ENCODE measurements at regions of chr15 and their contacts with region 1.

Region 1: GRCh38 chr15:31259562-31260252 is 66.9 kb upstream of the KLF13 start:
- DNase-seq: no peak
- ATAC-seq: no peak
- H3K4me3 ChIP-seq: no peak overlapping the region
- H3K27ac ChIP-seq: no peak overlapping the region
- H3K4me1 ChIP-seq: peaks cover 68% of the 10 kb centered on the region
- H3K27me3 ChIP-seq: no peaks in the 10 kb centered on the region
- CTCF ChIP-seq: no peak
- EP300 ChIP-seq: no peak
- POLR2A ChIP-seq: no peak
- RAD21 ChIP-seq: no peak

Region 2: DNA sequence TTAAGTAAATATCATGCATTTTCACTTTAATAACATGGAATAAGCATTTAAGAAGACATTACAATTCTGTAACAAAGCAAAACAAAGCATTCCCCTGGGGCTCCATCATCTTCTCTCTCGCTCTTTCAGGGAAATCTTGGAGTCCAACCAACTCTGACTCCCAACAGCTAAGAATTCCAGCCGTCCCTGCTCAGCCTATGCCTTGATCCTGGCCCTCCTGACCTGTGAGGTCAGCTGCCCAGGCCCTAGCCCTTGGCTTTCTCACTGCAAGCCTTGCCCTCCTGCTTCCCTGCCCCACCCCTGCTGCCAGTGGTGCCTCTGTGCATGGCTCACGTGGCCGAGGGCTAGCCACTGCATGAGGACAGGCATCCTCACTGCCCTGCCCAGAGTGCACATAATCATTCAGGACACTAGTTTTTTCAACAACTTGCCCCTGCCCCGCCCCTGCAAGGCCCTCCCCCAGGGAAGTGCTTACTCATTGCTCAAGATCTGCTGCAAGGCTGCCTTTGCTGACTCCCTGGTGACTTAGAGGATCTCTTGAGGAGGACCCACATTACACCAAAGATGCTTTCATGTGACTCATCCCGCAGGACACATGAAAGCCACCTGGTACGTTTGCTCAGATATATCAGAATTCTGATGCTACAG is 305.9 kb before region 1 on chr15:
- CTCF ChIA-PET with region 1: no interaction called
- POLR2A ChIA-PET with region 1: no interaction called
- RAD21 ChIA-PET with region 1: no interaction called
- SMC1A ChIA-PET with region 1: no interaction called
- in situ Hi-C with region 1: no loop called
- intact Hi-C with region 1: no loop called
- DNase-seq: no peak
- ATAC-seq: no peak
- H3K4me3 ChIP-seq: no peak overlapping the region
- H3K27ac ChIP-seq: no peak overlapping the region
- H3K4me1 ChIP-seq: peaks cover 4% of the 10 kb centered on the region; the same call in 1 of the 2 replicates
- H3K27me3 ChIP-seq: no peaks in the 10 kb centered on the region
- CTCF ChIP-seq: no peak
- EP300 ChIP-seq: no peak
- POLR2A ChIP-seq: 0 out of 2 replicates have a peak, but pooled peaks have one; percentile 25
- RAD21 ChIP-seq: no peak

Region 3: GRCh38 chr15:31236184-31237042 is 23.3 kb before region 1 on chr15:
- CTCF ChIA-PET with region 1: interaction called, 66 read pairs
- POLR2A ChIA-PET with region 1: interaction called, 111 read pairs
- RAD21 ChIA-PET with region 1: interaction called, 169 read pairs
- SMC1A ChIA-PET with region 1: interaction called, 152 read pairs
- in situ Hi-C with region 1: no loop called
- intact Hi-C with region 1: loop called (anchors 2 kb)
- DNase-seq: no peak
- ATAC-seq: peak; percentile 82
- H3K4me3 ChIP-seq: no peak overlapping the region
- H3K27ac ChIP-seq: peak overlapping the region; percentile 92
- H3K4me1 ChIP-seq: peaks cover 44% of the 10 kb centered on the region
- H3K27me3 ChIP-seq: no peaks in the 10 kb centered on the region
- CTCF ChIP-seq: no peak
- EP300 ChIP-seq: peak; percentile 80 to 92
- POLR2A ChIP-seq: no peak
- RAD21 ChIP-seq: no peak